HEK293 (cell line): ENCODE measurements at regions of chr20 and their contacts with region 1.

Region 1: GRCh38 chr20:3820048-3820900 is at the start of gene AP5S1:
- H3K4me3 ChIP-seq: peak within 1 kb of the TSS; percentile 73
- H3K27ac ChIP-seq: peak within 1 kb of the TSS; percentile 93
- H3K4me1 ChIP-seq: peaks cover 5% of the 10 kb centered on the region; the same call in 1 of the 2 replicates
- CTCF ChIP-seq: peak; percentile 99

Region 2: GRCh38 chr20:3470627-3471396 is 349.5 kb before region 1 on chr20 and contains the start of gene ATRN:
- CTCF ChIA-PET with region 1: no interaction called
- POLR2A ChIA-PET with region 1: no interaction called
- H3K4me3 ChIP-seq: peak within 1 kb of the TSS; percentile 81
- H3K27ac ChIP-seq: peak within 1 kb of the TSS; percentile 73
- H3K4me1 ChIP-seq: peaks cover 6% of the 10 kb centered on the region; the same call in 1 of the 2 replicates
- CTCF ChIP-seq: no peak

Region 3: GRCh38 chr20:3753098-3753980 is 66.9 kb before region 1 on chr20:
- CTCF ChIA-PET with region 1: interaction called, 11 read pairs
- POLR2A ChIA-PET with region 1: interaction called, 5 read pairs
- H3K4me3 ChIP-seq: no peak overlapping the region
- H3K27ac ChIP-seq: no peak overlapping the region
- H3K4me1 ChIP-seq: peaks cover 4% of the 10 kb centered on the region; the same call in 1 of the 2 replicates
- CTCF ChIP-seq: peak; percentile 64; the same call in 1 of the 2 replicates

Region 4: GRCh38 chr20:3781153-3781910 is 38.9 kb before region 1 on chr20 and contains the start of gene SPEF1:
- CTCF ChIA-PET with region 1: interaction called, 142 read pairs
- POLR2A ChIA-PET with region 1: interaction called, 30 read pairs
- H3K4me3 ChIP-seq: peak within 1 kb of the TSS; percentile 41
- H3K27ac ChIP-seq: no peak within 1 kb of the TSS
- H3K4me1 ChIP-seq: peaks cover 13% of the 10 kb centered on the region; the same call in 1 of the 2 replicates
- CTCF ChIP-seq: peak; percentile 86

Region 5: DNA sequence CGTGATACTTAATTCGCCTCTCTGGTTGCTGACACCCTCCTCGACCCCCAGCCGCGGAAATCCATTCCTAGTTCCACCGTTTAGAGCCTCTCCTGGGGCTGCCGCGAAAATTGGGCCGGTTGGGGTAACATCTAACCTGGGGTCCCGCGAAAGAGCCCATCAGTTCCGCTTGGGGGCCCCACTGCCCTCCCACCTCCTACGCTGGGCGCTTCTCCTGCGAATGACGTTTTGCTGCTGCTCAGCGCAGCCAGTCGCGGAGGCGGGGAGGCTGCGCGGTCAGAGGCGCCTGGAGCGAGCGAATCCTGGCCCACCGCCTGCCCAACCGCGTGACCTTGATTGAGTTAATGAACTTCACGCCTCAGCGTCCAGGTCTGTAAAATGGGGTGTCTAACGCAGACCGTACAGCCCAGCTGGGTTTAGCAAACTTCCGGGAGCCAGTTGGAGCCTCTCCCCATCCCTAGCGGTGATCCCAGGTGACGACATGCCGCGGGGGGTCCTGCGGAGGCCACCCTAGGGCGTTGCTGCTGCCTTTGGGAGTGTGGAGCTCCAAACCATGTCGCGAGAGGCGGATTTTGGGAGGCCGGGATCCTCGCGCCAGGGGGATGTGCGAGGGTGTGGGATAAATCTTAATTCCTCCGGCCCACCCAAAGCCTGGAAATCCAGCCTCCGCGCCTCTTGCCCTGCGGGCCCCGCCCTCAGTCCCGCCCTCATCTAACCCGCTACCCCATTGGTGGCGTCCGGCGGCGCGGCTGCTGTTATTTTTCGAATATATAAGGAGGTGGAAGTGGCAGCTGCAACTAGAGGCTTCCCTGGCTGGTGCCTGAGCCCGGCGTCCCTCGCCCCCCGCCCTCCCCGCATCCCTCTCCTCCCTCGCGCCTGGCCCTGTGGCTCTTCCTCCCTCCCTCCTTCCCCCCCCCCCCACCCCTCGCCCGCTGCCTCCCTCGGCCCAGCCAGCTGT is 24.5 kb before region 1 on chr20 and contains the start of gene CDC25B:
- CTCF ChIA-PET with region 1: interaction called, 142 read pairs
- POLR2A ChIA-PET with region 1: interaction called, 40 read pairs
- H3K4me3 ChIP-seq: peak within 1 kb of the TSS; percentile 83
- H3K27ac ChIP-seq: peak within 1 kb of the TSS; percentile 92
- H3K4me1 ChIP-seq: peaks cover 12% of the 10 kb centered on the region
- CTCF ChIP-seq: peak; percentile 59

Region 6: DNA sequence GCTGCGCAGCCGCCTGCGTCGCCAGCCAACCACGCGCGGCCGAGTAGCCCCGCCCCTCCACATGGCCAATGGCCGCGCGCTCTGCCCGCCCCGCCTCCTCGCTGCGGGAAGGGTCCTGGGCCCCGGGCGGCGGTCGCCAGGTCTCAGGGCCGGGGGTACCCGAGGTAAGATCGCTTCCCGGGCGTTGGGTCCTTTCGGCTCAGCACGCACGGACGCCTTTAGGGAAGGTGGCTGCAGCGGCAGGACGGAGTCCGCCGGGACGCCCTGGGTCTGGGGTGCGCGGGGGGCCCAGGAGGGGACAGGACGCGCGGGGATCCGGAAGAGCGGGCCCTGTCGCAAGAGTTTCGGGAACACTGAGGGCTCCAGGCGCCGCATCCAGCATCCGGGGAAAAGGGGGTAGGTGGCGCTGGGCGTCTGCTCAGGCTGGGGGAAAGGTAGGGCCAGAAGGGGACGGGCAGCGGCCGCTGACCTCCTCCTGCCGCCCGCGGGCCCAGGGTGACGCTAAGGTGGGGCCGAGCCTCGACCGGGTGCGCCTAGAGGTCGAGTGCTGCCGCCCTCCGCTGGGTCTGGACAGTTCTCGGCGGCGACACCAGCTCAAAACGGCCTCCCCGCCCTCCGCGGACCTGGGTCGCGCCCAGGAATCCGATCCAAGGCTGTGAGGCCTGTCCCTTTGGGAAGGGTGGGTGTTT is 26.6 kb after region 1 on chr20 and contains the start of gene MAVS:
- CTCF ChIA-PET with region 1: interaction called, 26 read pairs
- POLR2A ChIA-PET with region 1: interaction called, 8 read pairs
- H3K4me3 ChIP-seq: peak within 1 kb of the TSS; percentile 94
- H3K27ac ChIP-seq: peak within 1 kb of the TSS; percentile 92
- H3K4me1 ChIP-seq: peaks cover 11% of the 10 kb centered on the region
- CTCF ChIP-seq: peak; percentile 55; the same call in 1 of the 2 replicates